ENCODE measurements at regions of chr2 and their contacts with region 1.

Region 1: GRCh38 chr2:84881581-84882414 is 914 bp upstream of the TRABD2A start:
- DNase-seq: peak; percentile 78 to 92 (median 86)
- ATAC-seq: peak; percentile 70
- H3K4me3 ChIP-seq: peak overlapping the region; percentile 80 to 90
- H3K4me3 Mint-ChIP-seq: peak overlapping the region; percentile 93
- H3K27ac ChIP-seq: peak overlapping the region; percentile 72 to 79
- H3K27ac Mint-ChIP-seq: peak overlapping the region; percentile 93
- H3K4me1 ChIP-seq: peaks cover 27% of the 10 kb centered on the region
- H3K4me1 Mint-ChIP-seq: peaks cover 68% of the 10 kb centered on the region
- H3K27me3 ChIP-seq: no peaks in the 10 kb centered on the region
- H3K27me3 Mint-ChIP-seq: no peaks in the 10 kb centered on the region
- CTCF ChIP-seq: peak; percentile 64

Region 2: DNA sequence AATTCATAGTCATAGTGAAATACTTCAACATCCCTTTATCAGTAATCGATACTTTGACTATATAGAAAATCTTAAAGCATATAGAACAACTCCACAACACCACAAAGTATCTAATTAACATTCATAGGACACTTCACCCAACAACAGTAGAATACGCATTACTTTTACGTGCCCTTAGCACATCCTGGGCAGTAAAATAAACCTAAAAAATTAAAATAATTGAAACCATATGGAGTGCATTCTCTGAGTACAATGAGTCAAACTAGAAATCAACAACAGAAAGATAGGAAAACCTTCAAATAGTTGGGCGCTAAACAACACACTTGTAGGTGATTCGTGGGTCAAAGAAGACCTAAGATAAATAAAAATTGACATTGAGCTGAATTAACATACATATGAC is 865.6 kb before region 1 on chr2:
- CTCF ChIA-PET with region 1: no interaction called
- POLR2A ChIA-PET with region 1: no interaction called
- intact Hi-C with region 1: no loop called
- DNase-seq: no peak
- ATAC-seq: no peak
- H3K4me3 ChIP-seq: no peak overlapping the region
- H3K4me3 Mint-ChIP-seq: no peak overlapping the region
- H3K27ac ChIP-seq: no peak overlapping the region
- H3K27ac Mint-ChIP-seq: no peak overlapping the region
- H3K4me1 ChIP-seq: no peaks in the 10 kb centered on the region
- H3K4me1 Mint-ChIP-seq: no peaks in the 10 kb centered on the region
- H3K27me3 ChIP-seq: no peaks in the 10 kb centered on the region
- H3K27me3 Mint-ChIP-seq: no peaks in the 10 kb centered on the region
- CTCF ChIP-seq: no peak

Region 3: GRCh38 chr2:84495539-84496146 is 386.2 kb before region 1 on chr2:
- CTCF ChIA-PET with region 1: interaction called, 24 read pairs
- POLR2A ChIA-PET with region 1: interaction called, 3 read pairs
- intact Hi-C with region 1: loop called (anchors 1 kb)
- DNase-seq: peak in 6 of 9 experiments; percentile 22 to 87 (median 40)
- ATAC-seq: peak; percentile 99
- H3K4me3 ChIP-seq: no peak overlapping the region
- H3K4me3 Mint-ChIP-seq: no peak overlapping the region
- H3K27ac ChIP-seq: no peak overlapping the region
- H3K27ac Mint-ChIP-seq: peak overlapping the region; percentile 30
- H3K4me1 ChIP-seq: peaks cover 5% of the 10 kb centered on the region
- H3K4me1 Mint-ChIP-seq: peaks cover 18% of the 10 kb centered on the region
- H3K27me3 ChIP-seq: no peaks in the 10 kb centered on the region
- H3K27me3 Mint-ChIP-seq: no peaks in the 10 kb centered on the region
- CTCF ChIP-seq: peak; percentile 81

Region 4: GRCh38 chr2:84526562-84526961 is 355.2 kb before region 1 on chr2:
- CTCF ChIA-PET with region 1: interaction called, 12 read pairs
- POLR2A ChIA-PET with region 1: no interaction called
- intact Hi-C with region 1: loop called in 1 of 2 experiments (anchors 1 kb)
- DNase-seq: peak in 2 of 9 experiments; percentile 24 to 37
- ATAC-seq: no peak
- H3K4me3 ChIP-seq: no peak overlapping the region
- H3K4me3 Mint-ChIP-seq: no peak overlapping the region
- H3K27ac ChIP-seq: no peak overlapping the region
- H3K27ac Mint-ChIP-seq: peak overlapping the region; percentile 60
- H3K4me1 ChIP-seq: peaks cover 14% of the 10 kb centered on the region
- H3K4me1 Mint-ChIP-seq: peaks cover 15% of the 10 kb centered on the region
- H3K27me3 ChIP-seq: no peaks in the 10 kb centered on the region
- H3K27me3 Mint-ChIP-seq: no peaks in the 10 kb centered on the region
- CTCF ChIP-seq: no peak

Region 5: DNA sequence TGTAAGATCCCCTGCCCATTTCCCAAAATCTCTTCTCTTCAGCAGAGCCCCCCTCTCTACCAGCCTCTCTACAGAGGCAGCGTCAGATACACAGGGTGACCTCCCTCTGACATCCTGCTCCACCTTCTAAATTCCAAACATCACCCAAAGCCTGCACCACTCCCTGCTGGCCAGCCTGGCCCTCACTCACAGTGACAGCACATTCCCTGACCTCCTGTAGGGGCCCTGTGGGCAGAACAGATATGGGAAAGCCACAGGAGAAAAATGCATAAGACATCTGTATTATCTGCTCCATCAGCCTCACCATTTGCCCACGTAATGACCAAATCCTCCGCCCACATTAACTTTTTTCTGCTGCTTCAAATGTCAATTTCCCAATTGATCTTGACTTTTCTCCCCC is 41.5 kb before region 1 on chr2:
- CTCF ChIA-PET with region 1: interaction called, 16 read pairs
- POLR2A ChIA-PET with region 1: interaction called, 3 read pairs
- intact Hi-C with region 1: loop called in 1 of 2 experiments (anchors 10 kb)
- DNase-seq: no peak
- ATAC-seq: peak; percentile 19
- H3K4me3 ChIP-seq: peak overlapping the region in 1 of 2 experiments; percentile 31
- H3K4me3 Mint-ChIP-seq: peak overlapping the region; percentile 71
- H3K27ac ChIP-seq: peak overlapping the region; percentile 64 to 72
- H3K27ac Mint-ChIP-seq: peak overlapping the region; percentile 93
- H3K4me1 ChIP-seq: peaks cover 90% of the 10 kb centered on the region
- H3K4me1 Mint-ChIP-seq: peaks cover 88% of the 10 kb centered on the region
- H3K27me3 ChIP-seq: no peaks in the 10 kb centered on the region
- H3K27me3 Mint-ChIP-seq: no peaks in the 10 kb centered on the region
- CTCF ChIP-seq: no peak

Region 6: DNA sequence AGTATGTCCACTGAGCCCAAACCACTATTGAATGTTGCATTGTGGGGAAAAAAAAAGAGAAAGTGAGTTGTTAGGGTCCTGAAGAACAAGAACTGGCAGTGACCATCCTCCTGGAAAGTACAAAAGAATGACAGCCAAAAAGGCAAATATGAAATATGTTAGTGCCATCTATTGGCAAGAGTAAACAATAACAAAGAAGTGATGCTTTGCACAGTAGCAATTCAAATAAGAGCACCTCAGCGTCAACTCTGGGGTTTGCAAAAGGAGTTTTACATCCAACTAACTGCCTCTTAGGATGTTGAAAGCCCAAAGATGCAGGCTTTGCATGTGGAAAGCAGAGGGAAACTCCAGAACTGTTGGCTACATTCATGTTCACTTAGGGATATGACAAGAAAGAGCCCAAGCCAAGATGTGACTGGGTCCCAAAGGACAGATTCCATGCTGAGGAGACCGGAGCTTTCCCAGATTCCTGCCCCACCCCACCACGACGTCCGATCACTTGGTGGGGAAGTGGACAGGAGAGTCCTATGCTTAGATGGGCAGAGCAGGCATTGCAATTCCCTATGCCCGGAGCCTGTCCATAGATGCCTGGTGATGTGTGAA is 16.5 kb before region 1 on chr2:
- CTCF ChIA-PET with region 1: interaction called, 44 read pairs
- POLR2A ChIA-PET with region 1: interaction called, 7 read pairs
- intact Hi-C with region 1: loop called in 1 of 2 experiments (anchors 1 kb)
- DNase-seq: peak in 3 of 9 experiments; percentile 49 to 73 (median 60)
- ATAC-seq: peak; percentile 57
- H3K4me3 ChIP-seq: no peak overlapping the region
- H3K4me3 Mint-ChIP-seq: peak overlapping the region; percentile 61
- H3K27ac ChIP-seq: no peak overlapping the region
- H3K27ac Mint-ChIP-seq: peak overlapping the region; percentile 91
- H3K4me1 ChIP-seq: peaks cover 80% of the 10 kb centered on the region
- H3K4me1 Mint-ChIP-seq: peaks cover 85% of the 10 kb centered on the region
- H3K27me3 ChIP-seq: no peaks in the 10 kb centered on the region
- H3K27me3 Mint-ChIP-seq: no peaks in the 10 kb centered on the region
- CTCF ChIP-seq: peak; percentile 72

Region 7: GRCh38 chr2:84905181-84906107 is 23.6 kb after region 1 on chr2 and contains the start of gene TMSB10:
- CTCF ChIA-PET with region 1: interaction called, 30 read pairs
- POLR2A ChIA-PET with region 1: interaction called, 79 read pairs
- intact Hi-C with region 1: loop called in 1 of 2 experiments (anchors 1 kb)
- DNase-seq: peak; percentile 84 to 97 (median 91)
- ATAC-seq: peak; percentile 80
- H3K4me3 ChIP-seq: peak within 1 kb of the TSS; percentile 85 to 91
- H3K4me3 Mint-ChIP-seq: peak within 1 kb of the TSS; percentile 92
- H3K27ac ChIP-seq: peak within 1 kb of the TSS; percentile 68 to 80
- H3K27ac Mint-ChIP-seq: peak within 1 kb of the TSS; percentile 90
- H3K4me1 ChIP-seq: peaks cover 39% of the 10 kb centered on the region
- H3K4me1 Mint-ChIP-seq: peaks cover 59% of the 10 kb centered on the region
- H3K27me3 ChIP-seq: no peaks in the 10 kb centered on the region
- H3K27me3 Mint-ChIP-seq: no peaks in the 10 kb centered on the region
- CTCF ChIP-seq: no peak
- total RNA-seq, gene TMSB10: 1,479 to 1,577 TPM

Measured in CD8-positive, alpha-beta T cell (primary cell).